Posterior vena cava (tissue), 2 donors: ENCODE measurements at regions of chr5 and their contacts with region 1.

Region 1: GRCh38 chr5:172932313-172933017 is 26.8 kb upstream of the RPL26L1 start:
- DNase-seq: peak; percentile 95

Region 2: GRCh38 chr5:172454358-172455086 is 477.9 kb before region 1 on chr5 and contains the start of gene SH3PXD2B:
- intact Hi-C with region 1: loop called in 1 of 2 experiments (anchors 10 kb)
- DNase-seq: peak; percentile 86
- total RNA-seq, gene SH3PXD2B: 85.2 to 114 TPM

Region 3: GRCh38 chr5:172714491-172715421 is 217.7 kb before region 1 on chr5:
- intact Hi-C with region 1: loop called (anchors 1 to 2 kb)
- DNase-seq: peak; percentile 95

Region 4: DNA sequence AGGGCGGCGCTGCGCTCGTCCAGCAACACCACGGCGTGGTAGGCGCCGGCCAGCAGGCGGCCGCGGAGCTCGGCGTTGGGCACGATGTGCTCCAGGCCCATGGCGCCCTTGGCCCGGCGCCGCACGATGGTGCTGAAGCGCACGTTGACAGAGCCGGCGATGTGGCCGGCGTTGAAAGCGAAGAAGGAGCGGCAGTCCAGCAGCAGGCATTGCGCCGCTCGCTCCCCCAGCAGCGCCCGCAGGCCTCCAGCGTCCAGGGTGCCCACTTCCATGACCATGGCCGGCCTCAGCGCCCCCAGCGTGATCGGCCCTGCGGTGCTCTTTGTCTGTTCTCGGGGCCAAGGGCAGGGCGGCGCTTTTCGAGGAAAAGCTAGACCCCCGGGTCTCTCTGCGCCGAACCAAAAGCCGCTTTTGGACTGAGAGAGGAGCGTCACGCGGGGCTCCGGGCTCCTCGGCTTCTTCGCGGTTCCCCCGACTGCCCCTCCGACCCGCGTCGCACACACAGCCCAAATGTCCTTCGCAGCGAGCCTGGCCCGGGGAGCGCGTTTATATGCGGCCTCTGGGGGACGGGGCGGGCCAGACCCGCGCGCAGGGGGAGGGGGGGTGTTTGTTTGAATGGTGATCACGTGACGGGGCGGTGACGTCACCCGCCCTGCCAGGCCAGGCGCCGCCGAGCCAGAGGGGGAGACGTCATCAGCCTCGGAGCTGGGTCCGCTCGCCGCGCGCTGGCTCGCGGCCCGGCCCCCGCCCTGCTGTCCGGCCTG is 161.6 kb before region 1 on chr5 and contains the start of gene DUSP1:
- intact Hi-C with region 1: loop called in 1 of 2 experiments (anchors 10 kb)
- DNase-seq: peak; percentile 100
- total RNA-seq, gene DUSP1: 445 to 1,411 TPM

Region 5: GRCh38 chr5:173155912-173156311 is 223.4 kb after region 1 on chr5:
- intact Hi-C with region 1: no loop called
- DNase-seq: no peak